Activated CD4-positive, alpha-beta T cell treated with anti-CD3 and anti-CD28 coated beads for 36 hours (primary cell): ENCODE measurements at regions of chr1 and their contacts with region 1.

Region 1: DNA sequence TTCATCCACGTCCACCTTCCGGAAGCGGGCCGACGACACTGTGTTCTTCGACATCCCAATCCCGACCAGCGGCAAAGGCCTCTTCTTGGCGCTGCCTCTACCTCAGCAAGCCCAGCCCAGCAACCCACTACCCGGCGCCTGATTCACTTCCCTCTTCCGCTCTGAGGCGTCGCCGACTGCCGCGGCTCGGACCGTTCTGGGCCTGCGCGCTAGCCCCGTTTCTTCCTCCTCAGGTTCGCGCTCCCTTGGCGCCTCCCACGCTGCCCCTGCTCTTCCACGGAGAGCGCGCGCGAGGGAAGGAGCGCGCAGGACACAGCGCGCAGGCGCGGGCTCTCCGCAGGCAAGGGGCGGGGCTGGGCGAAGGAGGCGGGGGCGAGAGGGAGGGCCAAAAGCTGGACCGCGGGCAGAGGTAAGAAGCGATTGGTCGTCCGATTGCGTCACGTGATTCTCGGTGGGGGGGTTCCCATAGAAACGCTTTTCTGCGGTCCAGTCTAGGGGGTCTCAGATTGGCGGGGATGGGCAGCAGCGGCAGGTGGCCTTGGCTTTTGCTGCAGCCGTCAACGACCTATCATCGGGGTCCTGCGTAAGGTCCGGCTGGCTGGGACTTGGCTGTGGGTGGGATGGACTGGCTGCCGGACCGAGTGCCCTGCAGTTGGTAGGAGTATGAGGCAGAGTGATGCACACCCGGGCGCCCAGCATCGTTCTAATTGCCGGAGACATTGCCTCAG is at the start of gene ARPC5:
- DNase-seq: peak; percentile 98
- ATAC-seq: peak; percentile 90
- H3K4me3 Mint-ChIP-seq: peak within 1 kb of the TSS; percentile 97
- H3K27ac Mint-ChIP-seq: peak within 1 kb of the TSS; percentile 100
- H3K4me1 Mint-ChIP-seq: peaks cover 32% of the 10 kb centered on the region
- H3K27me3 Mint-ChIP-seq: no peaks in the 10 kb centered on the region
- total RNA-seq, gene ARPC5: 115 to 165 TPM

Region 2: DNA sequence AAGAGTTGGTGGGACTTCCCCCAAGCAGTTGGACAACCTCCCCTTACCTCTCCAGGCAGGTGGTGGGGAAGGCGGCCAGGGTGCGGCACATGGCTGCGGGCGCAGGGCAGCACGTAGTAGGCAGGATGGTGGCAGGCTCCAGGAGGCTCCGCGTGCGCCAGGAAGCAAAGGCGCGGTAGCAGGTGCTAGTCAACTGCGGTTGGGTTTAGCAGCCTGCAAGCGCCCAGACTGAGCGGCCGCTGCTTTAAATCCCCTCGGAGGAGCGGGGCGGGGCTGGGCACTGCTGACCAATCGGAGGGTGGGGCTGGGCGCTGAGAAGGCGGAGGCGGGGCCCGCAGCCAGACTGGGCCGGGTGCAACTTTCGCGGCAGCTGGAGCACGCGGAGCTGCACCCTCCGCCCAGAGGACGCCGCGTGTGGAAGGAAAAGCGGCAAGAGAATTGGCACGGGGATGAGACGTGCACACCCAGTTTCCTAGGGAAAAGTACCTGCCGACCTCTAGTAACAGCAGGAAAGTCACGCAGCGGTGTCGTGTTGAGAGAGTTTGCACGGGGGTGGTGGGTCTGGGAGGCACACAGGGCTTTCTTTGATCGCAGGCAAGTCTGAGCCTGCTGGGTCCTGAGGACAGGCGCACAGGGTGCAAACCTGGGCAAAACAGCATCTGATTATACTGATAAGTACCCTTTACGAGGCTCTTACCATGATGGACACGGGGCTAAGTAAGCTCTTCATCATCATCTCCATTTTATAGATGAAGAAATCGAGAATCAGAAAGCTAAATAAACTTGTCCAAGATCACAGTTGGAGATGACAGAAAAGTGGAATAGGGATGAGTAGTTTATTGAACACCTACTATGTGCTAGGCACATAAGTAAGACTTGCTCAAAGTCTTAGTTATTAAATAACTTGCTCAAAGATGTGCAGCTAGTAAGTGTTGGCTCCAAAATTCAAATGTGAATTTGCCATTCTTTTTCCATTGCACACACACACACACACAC is 1031.3 kb before region 1 on chr1 and contains the start of gene RGS16:
- CTCF ChIA-PET with region 1: no interaction called
- POLR2A ChIA-PET with region 1: no interaction called
- intact Hi-C with region 1: loop called in 1 of 2 experiments (anchors 10 kb)
- DNase-seq: peak; percentile 97
- ATAC-seq: peak; percentile 88
- H3K4me3 Mint-ChIP-seq: no peak within 1 kb of the TSS
- H3K27ac Mint-ChIP-seq: peak within 1 kb of the TSS; percentile 70
- H3K4me1 Mint-ChIP-seq: peaks cover 43% of the 10 kb centered on the region
- H3K27me3 Mint-ChIP-seq: peaks cover 6% of the 10 kb centered on the region
- total RNA-seq, gene RGS16: 27.2 to 30.6 TPM

Region 3: DNA sequence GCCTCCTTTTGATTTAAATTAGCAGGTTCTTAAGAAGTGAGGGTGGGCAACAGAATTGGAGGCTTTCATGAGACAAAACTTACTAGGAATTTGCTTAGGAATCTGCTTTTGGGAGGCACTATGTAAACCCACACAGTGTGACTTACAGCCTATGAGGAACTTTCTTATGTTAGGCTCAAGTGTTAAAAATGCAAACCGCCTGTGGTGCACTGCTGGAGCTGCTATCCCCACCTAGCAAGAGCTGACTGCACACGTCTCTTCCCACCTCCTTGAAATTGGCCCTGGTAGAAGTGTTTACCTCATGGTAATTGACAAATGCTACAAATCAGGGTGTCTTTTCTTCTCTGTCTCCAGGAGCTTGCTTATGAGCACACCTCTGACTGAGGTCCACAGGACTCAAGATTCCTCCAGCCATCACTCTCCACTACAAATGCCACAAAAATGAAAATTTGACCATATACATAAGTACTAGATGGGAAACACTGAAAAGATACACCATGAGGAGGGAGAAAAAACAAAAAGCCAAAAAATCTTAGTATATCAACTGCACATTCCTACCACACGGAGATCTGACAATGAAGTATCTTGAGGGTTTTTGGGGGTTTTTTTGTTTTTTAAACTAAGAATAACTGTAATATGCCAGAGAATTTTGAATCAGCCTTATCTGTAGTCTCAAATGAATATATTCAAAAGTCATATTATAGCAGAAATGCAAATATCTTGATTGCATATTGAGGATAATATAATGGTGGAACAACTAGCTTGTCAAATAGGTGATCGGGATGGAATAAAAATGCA is 864.4 kb before region 1 on chr1:
- CTCF ChIA-PET with region 1: no interaction called
- POLR2A ChIA-PET with region 1: no interaction called
- intact Hi-C with region 1: no loop called
- DNase-seq: no peak
- ATAC-seq: no peak
- H3K4me3 Mint-ChIP-seq: no peak overlapping the region
- H3K27ac Mint-ChIP-seq: no peak overlapping the region
- H3K4me1 Mint-ChIP-seq: no peaks in the 10 kb centered on the region
- H3K27me3 Mint-ChIP-seq: peaks cover 13% of the 10 kb centered on the region

Region 4: GRCh38 chr1:183590244-183591191 is 45.3 kb before region 1 on chr1 and contains the start of gene NCF2:
- CTCF ChIA-PET with region 1: interaction called, 3 read pairs
- POLR2A ChIA-PET with region 1: interaction called, 3 read pairs
- intact Hi-C with region 1: loop called (anchors 1 to 5 kb)
- DNase-seq: peak; percentile 74
- ATAC-seq: peak; percentile 92
- H3K4me3 Mint-ChIP-seq: peak within 1 kb of the TSS; percentile 62
- H3K27ac Mint-ChIP-seq: peak within 1 kb of the TSS; percentile 89
- H3K4me1 Mint-ChIP-seq: peaks cover 47% of the 10 kb centered on the region
- H3K27me3 Mint-ChIP-seq: no peaks in the 10 kb centered on the region
- total RNA-seq, gene NCF2: 8.7 to 9.0 TPM

Region 5: DNA sequence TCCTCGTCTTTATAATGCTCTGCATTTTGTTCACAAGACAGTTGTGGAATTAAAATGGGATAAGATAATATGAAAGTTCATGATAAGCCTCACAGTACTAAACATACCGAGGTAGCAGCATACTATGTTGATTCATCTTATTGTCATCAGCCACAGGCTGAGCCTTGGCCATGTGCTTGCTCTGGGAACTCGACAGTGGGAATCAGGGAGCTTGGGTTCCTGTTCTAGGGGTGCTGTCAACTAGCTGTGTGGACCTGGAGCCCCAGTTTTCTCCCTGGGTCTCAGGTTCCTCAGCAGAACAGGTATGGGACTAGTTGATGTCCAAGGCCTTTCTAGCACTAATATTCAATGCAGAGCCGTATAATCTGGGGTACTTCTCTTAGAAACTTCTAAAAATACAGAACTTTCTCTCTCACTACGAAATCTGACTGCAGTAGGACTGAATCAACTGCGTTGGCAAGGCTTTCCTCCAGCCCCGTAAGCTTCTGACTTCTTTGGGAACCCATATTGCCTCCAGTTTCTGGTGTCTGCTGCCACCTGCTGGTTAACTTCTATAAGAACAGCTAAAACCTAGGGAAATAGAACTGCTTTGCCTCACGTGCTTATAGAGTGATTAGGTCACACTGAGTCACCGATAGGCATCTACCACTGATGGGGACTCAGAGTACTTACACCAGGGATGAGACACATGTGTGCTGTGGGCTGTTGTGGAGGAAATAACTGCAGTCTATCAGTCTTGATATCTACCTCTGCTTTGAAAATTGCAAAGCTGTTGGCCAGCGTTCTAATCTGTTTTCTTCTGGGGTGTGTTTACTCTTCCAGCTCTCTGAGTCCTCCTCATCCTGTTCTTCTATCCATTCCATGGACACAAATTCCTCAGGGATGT is 280.1 kb after region 1 on chr1:
- CTCF ChIA-PET with region 1: interaction called, 8 read pairs
- POLR2A ChIA-PET with region 1: no interaction called
- intact Hi-C with region 1: loop called in 1 of 2 experiments (anchors 1 kb)
- DNase-seq: peak; percentile 82
- ATAC-seq: peak; percentile 99
- H3K4me3 Mint-ChIP-seq: no peak overlapping the region
- H3K27ac Mint-ChIP-seq: no peak overlapping the region
- H3K4me1 Mint-ChIP-seq: peaks cover 19% of the 10 kb centered on the region
- H3K27me3 Mint-ChIP-seq: no peaks in the 10 kb centered on the region

Region 6: GRCh38 chr1:184386312-184387068 is 750.7 kb after region 1 on chr1 and contains the start of gene C1orf21:
- CTCF ChIA-PET with region 1: no interaction called
- POLR2A ChIA-PET with region 1: no interaction called
- intact Hi-C with region 1: loop called (anchors 1 to 10 kb)
- DNase-seq: peak; percentile 89
- ATAC-seq: peak; percentile 95
- H3K4me3 Mint-ChIP-seq: peak within 1 kb of the TSS; percentile 66
- H3K27ac Mint-ChIP-seq: peak within 1 kb of the TSS; percentile 38
- H3K4me1 Mint-ChIP-seq: peaks cover 12% of the 10 kb centered on the region
- H3K27me3 Mint-ChIP-seq: peaks cover 44% of the 10 kb centered on the region
- total RNA-seq, gene C1orf21: 2.6 to 6.1 TPM

Region 7: GRCh38 chr1:185317034-185317885 is 1681.5 kb after region 1 on chr1 and contains the start of gene IVNS1ABP:
- CTCF ChIA-PET with region 1: no interaction called
- POLR2A ChIA-PET with region 1: no interaction called
- intact Hi-C with region 1: loop called (anchors 5 to 10 kb)
- DNase-seq: peak; percentile 97
- ATAC-seq: peak; percentile 81
- H3K4me3 Mint-ChIP-seq: peak within 1 kb of the TSS; percentile 84
- H3K27ac Mint-ChIP-seq: peak within 1 kb of the TSS; percentile 99
- H3K4me1 Mint-ChIP-seq: peaks cover 38% of the 10 kb centered on the region
- H3K27me3 Mint-ChIP-seq: no peaks in the 10 kb centered on the region
- total RNA-seq, gene IVNS1ABP: 116 to 129 TPM